ENCODE measurements at regions of chr17 and their contacts with region 1.

Region 1: DNA sequence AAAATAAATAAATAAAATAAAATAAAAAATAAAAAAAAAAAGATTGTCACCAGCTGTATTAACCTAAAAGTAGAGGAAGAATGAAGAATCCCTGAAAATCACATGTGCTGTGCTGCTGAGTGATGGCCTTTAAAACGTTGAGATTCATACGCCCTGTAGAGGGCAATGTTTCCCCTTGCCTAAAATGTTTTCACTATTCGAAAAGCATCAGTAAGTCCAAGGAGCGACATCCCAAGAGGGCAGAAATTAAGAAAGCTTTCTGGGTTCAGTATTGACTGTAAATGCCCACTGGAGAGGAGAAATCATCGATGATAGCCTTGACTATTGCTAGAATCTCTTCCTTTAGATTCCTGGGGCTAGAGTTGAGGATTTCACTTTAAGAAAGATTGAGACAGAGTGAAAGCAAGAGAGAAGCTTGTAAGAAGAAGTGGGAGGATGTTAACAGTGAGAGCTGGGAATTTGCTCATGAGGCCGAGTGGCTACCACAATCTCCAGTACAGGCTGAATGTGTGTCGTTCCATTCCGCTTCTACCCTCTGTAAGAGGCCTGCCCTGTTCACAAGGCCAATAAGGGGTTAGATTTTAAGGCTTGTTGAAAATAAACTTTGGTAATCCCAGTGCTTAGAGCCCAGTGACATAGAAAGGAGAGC is 170.8 kb upstream of the FAM20A start:
- DNase-seq: no peak
- ATAC-seq: peak; percentile 60 to 73
- H3K4me3 ChIP-seq: peak overlapping the region in 2 of 4 donors; percentile 15 to 28
- H3K27ac ChIP-seq: peak overlapping the region in 3 of 4 donors; percentile 12 to 53 (median 38)
- H3K4me1 ChIP-seq: peaks cover 0 to 8% of the 10 kb centered on the region in 2 donors
- H3K27me3 ChIP-seq: no peaks in the 10 kb centered on the region
- CTCF ChIP-seq: peak; percentile 22 to 55 (median 34)
- POLR2A ChIP-seq: no peak

Region 2: DNA sequence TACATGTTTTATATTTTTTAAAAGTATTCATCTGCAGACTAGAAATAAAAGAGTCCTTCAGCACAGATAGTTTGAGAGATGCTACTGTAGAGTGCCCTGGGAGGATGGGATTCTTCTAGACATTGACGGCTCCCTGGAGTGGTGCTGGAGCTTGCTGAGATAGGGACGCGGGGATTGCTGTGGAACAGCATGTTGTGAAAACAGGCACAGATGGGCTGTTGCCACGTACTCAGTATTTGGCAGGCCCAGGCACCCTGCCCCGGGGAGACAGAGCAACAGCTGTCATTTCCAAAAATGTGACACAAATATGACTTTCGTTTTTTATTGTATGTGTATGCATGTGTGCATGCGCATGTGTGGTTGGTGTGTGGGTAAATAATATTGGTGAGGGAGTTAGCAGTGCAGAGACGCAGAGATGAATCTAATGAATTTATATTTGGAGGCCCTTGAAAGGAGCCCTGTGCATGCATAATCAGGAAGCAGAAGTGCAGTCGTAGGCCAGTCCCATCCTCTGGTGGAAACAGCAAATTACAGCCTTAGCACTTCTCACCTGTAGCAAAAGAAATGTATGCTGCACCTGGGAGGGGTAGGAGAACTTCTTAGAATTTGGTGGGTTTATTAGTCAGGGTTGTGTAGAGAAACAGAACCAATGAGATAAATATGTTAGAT is 189.4 kb after region 1 on chr17:
- in situ Hi-C with region 1: loop called in 2 of 4 experiments (anchors 5 to 10 kb)
- intact Hi-C with region 1: no loop called
- DNase-seq: peak in 1 of 2 donors; percentile 52
- ATAC-seq: peak; percentile 36 to 58
- H3K4me3 ChIP-seq: no peak overlapping the region
- H3K27ac ChIP-seq: peak overlapping the region in 2 of 4 donors; percentile 28 to 36
- H3K4me1 ChIP-seq: no peaks in the 10 kb centered on the region
- H3K27me3 ChIP-seq: no peaks in the 10 kb centered on the region
- CTCF ChIP-seq: no peak
- POLR2A ChIP-seq: no peak

Region 3: GRCh38 chr17:69060822-69061221 is 288.8 kb after region 1 on chr17 and contains the start of gene ABCA9:
- in situ Hi-C with region 1: loop called in 1 of 4 experiments (anchors 10 kb)
- intact Hi-C with region 1: no loop called
- DNase-seq: peak in 1 of 2 donors; percentile 11
- ATAC-seq: peak; percentile 73 to 78
- H3K4me3 ChIP-seq: peak within 1 kb of the TSS in 2 of 4 donors; percentile 5 to 14
- H3K27ac ChIP-seq: peak within 1 kb of the TSS; percentile 22 to 39 (median 28)
- H3K4me1 ChIP-seq: no peaks in the 10 kb centered on the region
- H3K27me3 ChIP-seq: no peaks in the 10 kb centered on the region
- CTCF ChIP-seq: no peak
- POLR2A ChIP-seq: peak in 1 of 2 donors; percentile 9
- total RNA-seq, gene ABCA9: 6.0 to 38.2 (median 8.5) TPM

Region 4: DNA sequence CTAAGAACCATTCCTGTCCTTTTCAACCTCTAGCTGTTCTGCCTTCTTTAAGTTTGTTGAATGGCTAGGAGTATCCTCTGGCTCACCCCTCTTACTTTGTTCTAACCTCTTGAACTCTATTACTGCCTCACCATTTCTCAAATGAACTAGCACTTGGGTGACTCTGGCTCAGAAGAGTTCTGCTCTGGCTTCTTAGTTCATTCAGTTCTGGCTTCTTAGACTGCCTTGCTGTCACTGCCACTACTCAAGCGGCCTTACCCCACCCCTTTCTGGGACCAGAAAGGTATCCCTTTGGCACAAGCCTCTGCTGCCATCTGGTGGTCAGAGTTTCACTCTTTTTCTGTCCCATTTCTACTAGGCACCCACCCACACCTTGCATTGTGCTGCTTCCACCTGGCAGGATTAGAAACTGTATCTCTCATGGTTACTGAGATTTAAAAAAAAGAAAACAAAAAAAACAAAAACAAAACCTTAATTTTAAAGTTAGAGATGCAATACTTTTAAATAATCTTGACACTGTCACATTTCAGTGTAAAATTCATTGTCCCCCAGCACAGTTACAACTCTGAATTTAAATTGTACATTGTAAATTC is 463.4 kb after region 1 on chr17:
- in situ Hi-C with region 1: loop called (anchors 10 kb)
- intact Hi-C with region 1: loop called (anchors 5 kb)
- DNase-seq: peak; percentile 43 to 58
- ATAC-seq: peak in 1 of 2 donors; percentile 68
- H3K4me3 ChIP-seq: no peak overlapping the region
- H3K27ac ChIP-seq: no peak overlapping the region
- H3K4me1 ChIP-seq: no peaks in the 10 kb centered on the region
- H3K27me3 ChIP-seq: no peaks in the 10 kb centered on the region
- CTCF ChIP-seq: peak; percentile 20 to 62 (median 55)
- POLR2A ChIP-seq: no peak

Measured in gastrocnemius medialis (tissue), 4 donors.